Activated CD4-positive, alpha-beta T cell treated with anti-CD3 and anti-CD28 coated beads, Interleukin-2, amount 10 ng/mL, durations not matched to agents 24 days and 14 days (primary cell): ENCODE measurements at regions of chr5 and their contacts with region 1.

Region 1: DNA sequence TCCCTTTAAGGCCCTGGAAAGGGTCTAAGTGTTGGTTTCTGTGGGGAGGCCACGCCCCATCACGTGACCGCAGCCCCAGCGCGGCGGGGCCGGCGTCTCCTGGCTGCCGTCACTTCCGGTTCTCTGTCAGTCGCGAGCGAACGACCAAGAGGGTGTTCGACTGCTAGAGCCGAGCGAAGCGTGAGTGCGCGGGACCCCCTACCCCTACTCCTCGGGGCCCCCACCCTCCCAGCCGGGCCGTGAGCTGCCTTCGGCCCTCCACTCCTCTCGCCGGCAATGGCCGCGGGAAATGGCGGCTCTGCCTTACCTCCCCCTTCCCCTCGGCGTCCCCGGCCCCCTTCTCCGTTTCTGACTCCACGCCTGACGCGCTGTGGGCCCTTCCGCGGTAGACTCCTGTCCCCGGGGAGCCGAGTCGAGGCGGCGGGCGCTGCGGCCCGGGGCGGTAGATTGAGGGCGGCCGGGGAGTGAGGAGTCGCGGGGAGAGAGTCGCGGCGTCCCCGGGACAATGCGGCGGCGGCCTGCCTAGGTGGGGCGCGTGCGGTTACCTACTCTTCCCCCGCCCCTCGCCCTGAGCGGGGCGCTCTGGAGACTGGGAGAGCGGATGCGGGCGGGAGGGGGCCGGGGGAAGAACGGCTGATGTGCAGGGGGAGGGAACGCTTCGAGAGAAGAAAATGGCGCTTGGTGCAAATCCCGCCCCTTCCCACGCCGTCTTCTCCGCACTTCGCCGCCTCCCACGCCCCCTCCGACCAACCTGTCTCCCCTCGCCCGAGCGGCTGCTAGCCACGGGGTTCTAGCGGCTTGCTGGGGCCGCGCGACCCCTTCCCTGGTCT is at the start of gene SUB1:
- DNase-seq: peak; percentile 98
- H3K4me3 Mint-ChIP-seq: peak within 1 kb of the TSS; percentile 94
- H3K27ac Mint-ChIP-seq: peak within 1 kb of the TSS; percentile 99
- H3K4me1 Mint-ChIP-seq: peaks cover 62% of the 10 kb centered on the region
- H3K27me3 Mint-ChIP-seq: peaks cover 1% of the 10 kb centered on the region
- total RNA-seq, gene SUB1: 403 and 404 TPM in 2 replicates

Region 2: GRCh38 chr5:31531888-31532710 is 1053.6 kb before region 1 on chr5 and contains the starts of genes C5orf22 and DROSHA:
- intact Hi-C with region 1: loop called (anchors 10 kb)
- DNase-seq: peak; percentile 98
- H3K4me3 Mint-ChIP-seq: peak within 1 kb of the TSS; percentile 91
- H3K27ac Mint-ChIP-seq: peak within 1 kb of the TSS; percentile 96
- H3K4me1 Mint-ChIP-seq: peaks cover 27% of the 10 kb centered on the region
- H3K27me3 Mint-ChIP-seq: no peaks in the 10 kb centered on the region
- total RNA-seq, gene C5orf22: 34.2 and 37.7 TPM in 2 replicates
- total RNA-seq, gene DROSHA: 86.5 and 88.7 TPM in 2 replicates

Region 3: GRCh38 chr5:32232441-32233219 is 353.0 kb before region 1 on chr5:
- intact Hi-C with region 1: loop called (anchors 10 kb)
- DNase-seq: peak; percentile 93
- H3K4me3 Mint-ChIP-seq: no peak overlapping the region
- H3K27ac Mint-ChIP-seq: peak overlapping the region; percentile 45
- H3K4me1 Mint-ChIP-seq: peaks cover 15% of the 10 kb centered on the region
- H3K27me3 Mint-ChIP-seq: no peaks in the 10 kb centered on the region

Region 4: GRCh38 chr5:32312647-32313523 is 272.8 kb before region 1 on chr5 and contains the start of gene MTMR12:
- intact Hi-C with region 1: loop called (anchors 1 kb)
- DNase-seq: peak; percentile 100
- H3K4me3 Mint-ChIP-seq: peak within 1 kb of the TSS; percentile 96
- H3K27ac Mint-ChIP-seq: peak within 1 kb of the TSS; percentile 87
- H3K4me1 Mint-ChIP-seq: peaks cover 28% of the 10 kb centered on the region
- H3K27me3 Mint-ChIP-seq: no peaks in the 10 kb centered on the region
- total RNA-seq, gene MTMR12: 26.5 and 29.8 TPM in 2 replicates

Region 5: DNA sequence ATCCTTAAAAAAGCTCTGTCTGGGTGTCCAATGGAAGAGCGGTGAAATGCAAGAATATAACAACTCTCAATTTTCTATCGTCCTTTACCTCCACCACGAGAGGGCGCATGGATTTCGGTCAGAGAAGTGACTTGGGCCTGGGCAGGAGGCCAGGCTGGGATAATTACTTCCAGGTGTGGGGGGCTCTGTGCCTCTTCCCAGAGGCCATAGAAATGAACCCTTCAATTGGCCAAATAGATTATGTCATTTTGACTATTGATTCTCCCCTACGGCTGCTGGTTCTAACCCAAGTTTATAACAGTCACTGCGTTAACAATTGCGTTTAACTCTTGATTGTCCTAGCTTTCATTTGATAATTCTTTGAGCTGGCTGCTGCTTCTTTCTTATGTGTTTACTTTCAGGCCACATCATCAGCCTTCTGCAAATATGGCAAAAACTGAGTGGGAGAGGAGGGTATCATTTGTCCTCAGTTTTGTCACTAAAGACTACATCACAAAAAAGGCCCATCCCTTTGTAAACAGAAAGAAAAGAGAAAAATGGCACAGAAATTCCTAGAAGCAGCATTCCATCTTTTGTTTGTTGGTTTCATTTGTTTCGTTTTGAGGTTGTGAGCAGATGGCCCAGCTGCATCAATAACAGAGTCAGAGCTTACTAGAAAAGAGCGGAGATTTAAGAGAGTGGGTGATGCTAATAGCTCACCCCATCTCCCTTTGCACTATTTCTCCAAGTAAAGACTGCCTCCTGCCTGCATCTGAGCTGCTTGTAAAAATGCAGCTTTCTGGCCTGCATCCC is 95.7 kb before region 1 on chr5:
- intact Hi-C with region 1: loop called (anchors 1 kb)
- DNase-seq: peak; percentile 91
- H3K4me3 Mint-ChIP-seq: no peak overlapping the region
- H3K27ac Mint-ChIP-seq: no peak overlapping the region
- H3K4me1 Mint-ChIP-seq: peaks cover 8% of the 10 kb centered on the region
- H3K27me3 Mint-ChIP-seq: no peaks in the 10 kb centered on the region

Region 6: DNA sequence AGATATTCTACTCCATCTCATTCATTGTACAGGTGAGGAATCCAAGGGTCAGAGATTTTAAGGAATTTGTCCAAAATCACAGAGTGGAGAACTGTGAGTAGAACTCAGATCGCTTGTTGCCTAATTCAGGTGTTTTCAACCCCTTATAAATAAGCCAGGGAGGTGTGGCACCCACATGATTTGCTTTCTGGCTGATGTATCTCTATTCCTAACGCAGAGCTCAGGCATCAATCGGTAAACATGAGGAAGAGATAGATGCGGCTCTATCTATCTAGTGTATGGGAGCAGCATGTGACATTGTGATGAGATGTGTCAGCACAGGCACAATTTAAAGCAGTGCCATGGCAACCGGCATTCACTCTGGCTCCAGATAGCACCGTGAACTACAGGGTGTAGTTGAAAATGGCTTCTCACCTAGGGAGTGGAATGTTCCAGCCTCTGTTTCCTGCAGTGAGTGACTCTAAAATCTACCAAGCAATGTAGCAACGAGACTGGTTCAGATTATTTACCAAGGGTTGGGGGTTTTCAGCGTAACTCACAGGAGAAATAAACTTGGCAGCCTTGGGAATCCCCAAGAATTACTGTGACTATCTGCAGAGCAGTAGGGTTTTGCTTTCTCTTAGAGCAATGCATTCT is 53.7 kb before region 1 on chr5:
- intact Hi-C with region 1: loop called (anchors 1 kb)
- DNase-seq: peak; percentile 89
- H3K4me3 Mint-ChIP-seq: peak overlapping the region; percentile 93
- H3K27ac Mint-ChIP-seq: peak overlapping the region; percentile 97
- H3K4me1 Mint-ChIP-seq: peaks cover 45% of the 10 kb centered on the region
- H3K27me3 Mint-ChIP-seq: no peaks in the 10 kb centered on the region

Region 7: DNA sequence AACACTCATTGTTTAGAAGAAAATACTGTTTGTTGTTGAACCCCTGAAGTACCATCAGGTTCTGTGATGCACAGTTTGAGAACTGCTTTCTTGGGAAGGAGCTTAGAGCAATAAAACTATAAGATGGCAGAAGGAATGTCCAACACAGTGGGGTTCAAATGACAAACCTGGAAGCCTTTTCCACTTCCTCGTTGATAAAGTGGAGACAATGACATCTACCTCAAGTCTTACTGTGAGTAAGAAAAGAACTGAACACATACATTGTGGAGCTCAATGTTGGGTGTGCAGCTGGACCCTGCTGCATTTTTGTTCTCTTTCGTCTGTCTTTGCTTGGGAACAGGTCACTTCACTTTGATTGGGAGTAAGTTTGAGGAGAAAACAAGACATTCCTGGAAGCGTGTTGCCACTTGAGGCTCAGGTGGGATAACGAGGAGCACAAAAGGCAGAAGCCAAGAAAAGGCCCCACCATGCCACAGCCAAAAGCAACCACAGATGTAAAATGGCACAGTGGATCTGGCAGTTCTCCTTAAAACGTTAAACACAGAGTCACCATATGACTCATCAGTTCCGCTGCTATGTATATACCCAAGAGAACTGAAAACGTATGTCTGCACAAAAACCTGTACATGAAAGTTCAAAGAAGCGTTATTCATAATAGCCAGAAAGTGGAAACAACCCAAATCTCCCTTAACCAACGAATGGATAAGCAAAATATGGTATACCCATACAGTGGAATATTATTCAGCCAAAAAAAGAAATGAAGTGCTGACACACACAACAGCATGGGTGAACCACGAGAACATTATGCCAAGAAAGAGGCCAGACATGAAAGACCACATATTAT is 43.2 kb before region 1 on chr5:
- intact Hi-C with region 1: loop called (anchors 1 kb)
- DNase-seq: peak; percentile 85
- H3K4me3 Mint-ChIP-seq: peak overlapping the region; percentile 57
- H3K27ac Mint-ChIP-seq: peak overlapping the region; percentile 91
- H3K4me1 Mint-ChIP-seq: peaks cover 46% of the 10 kb centered on the region
- H3K27me3 Mint-ChIP-seq: no peaks in the 10 kb centered on the region